ENCODE measurements at regions of chr3 and their contacts with region 1.

Region 1: DNA sequence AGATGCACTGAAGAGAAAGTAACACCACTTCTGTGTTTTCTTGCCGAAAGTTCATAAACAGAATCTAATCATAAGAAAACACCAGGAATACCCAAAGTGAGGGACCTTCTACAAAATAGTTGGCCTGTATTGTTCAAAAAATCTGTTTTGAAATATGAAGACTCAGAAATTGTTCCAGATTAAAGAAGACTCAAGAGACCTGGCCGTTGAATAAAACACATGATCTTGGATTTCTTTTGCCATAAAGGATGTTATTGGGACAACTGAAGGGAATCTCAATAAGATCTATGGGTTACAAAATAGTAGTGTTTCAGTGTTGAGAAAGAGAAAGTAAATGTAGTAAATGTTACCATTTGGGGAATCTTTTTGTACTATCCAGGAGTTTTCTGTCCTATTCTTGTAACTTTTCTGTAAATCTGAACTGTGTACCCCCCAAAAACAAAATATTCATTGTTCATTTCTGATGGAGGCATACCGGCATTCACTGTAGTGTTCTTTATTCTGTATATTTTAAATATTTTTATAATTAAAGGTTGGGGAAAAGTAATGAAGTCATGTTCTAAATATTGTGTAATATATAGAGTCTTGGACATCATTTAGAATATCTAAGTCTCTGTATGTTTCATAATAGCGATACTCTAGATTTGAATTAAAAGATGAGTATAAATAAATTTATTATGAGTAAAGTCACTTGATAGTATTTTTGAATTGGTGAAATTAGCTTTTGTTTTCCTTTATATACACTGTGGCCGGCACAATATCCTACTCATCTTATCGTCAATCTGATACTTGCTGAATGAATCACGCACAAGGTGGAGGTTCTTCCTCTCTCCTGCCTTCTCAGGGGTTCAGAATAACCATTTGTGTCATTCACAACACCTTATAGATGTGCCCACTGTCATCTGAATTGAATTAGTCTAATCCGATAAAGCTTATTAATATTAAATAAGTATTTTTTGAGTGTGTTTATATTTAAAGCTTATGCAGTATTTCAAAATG is 66.7 kb downstream of the TRAK1 start:
- DNase-seq: no peak
- ATAC-seq: no peak
- H3K4me3 Mint-ChIP-seq: no peak overlapping the region
- H3K27ac Mint-ChIP-seq: no peak overlapping the region
- H3K4me1 Mint-ChIP-seq: peaks cover 67% of the 10 kb centered on the region
- H3K27me3 Mint-ChIP-seq: no peaks in the 10 kb centered on the region
- CTCF ChIP-seq: no peak

Region 2: GRCh38 chr3:41955192-41955591 is 202.6 kb before region 1 on chr3:
- CTCF ChIA-PET with region 1: no interaction called
- POLR2A ChIA-PET with region 1: no interaction called
- intact Hi-C with region 1: no loop called
- DNase-seq: no peak
- ATAC-seq: no peak
- H3K4me3 Mint-ChIP-seq: no peak overlapping the region
- H3K27ac Mint-ChIP-seq: no peak overlapping the region
- H3K4me1 Mint-ChIP-seq: no peaks in the 10 kb centered on the region
- H3K27me3 Mint-ChIP-seq: no peaks in the 10 kb centered on the region
- CTCF ChIP-seq: no peak

Region 3: GRCh38 chr3:42173307-42173706 is 15.5 kb after region 1 on chr3:
- CTCF ChIA-PET with region 1: interaction called, 3 read pairs
- POLR2A ChIA-PET with region 1: no interaction called
- intact Hi-C with region 1: loop called (anchors 1 kb)
- DNase-seq: no peak
- ATAC-seq: peak; percentile 36
- H3K4me3 Mint-ChIP-seq: peak overlapping the region; percentile 49
- H3K27ac Mint-ChIP-seq: peak overlapping the region; percentile 79
- H3K4me1 Mint-ChIP-seq: peaks cover 77% of the 10 kb centered on the region
- H3K27me3 Mint-ChIP-seq: no peaks in the 10 kb centered on the region
- CTCF ChIP-seq: no peak

Measured in activated B cell treated with CpG ODN at 0.5 μM for 24 hours (primary cell).